HepG2 (cell line): ENCODE measurements at regions of chr13 and their contacts with region 1.

Region 1: GRCh38 chr13:70960841-70961443 is 852.7 kb upstream of the KLHL1 start:
- DNase-seq: peak; percentile 18
- ATAC-seq: no peak
- H3K4me3 ChIP-seq: no peak overlapping the region
- H3K27ac ChIP-seq: no peak overlapping the region
- H3K4me1 ChIP-seq: no peaks in the 10 kb centered on the region
- H3K27me3 ChIP-seq: no peaks in the 10 kb centered on the region
- CTCF ChIP-seq: peak; percentile 58
- EP300 ChIP-seq: no peak
- POLR2A ChIP-seq: no peak
- RAD21 ChIP-seq: no peak

Region 2: DNA sequence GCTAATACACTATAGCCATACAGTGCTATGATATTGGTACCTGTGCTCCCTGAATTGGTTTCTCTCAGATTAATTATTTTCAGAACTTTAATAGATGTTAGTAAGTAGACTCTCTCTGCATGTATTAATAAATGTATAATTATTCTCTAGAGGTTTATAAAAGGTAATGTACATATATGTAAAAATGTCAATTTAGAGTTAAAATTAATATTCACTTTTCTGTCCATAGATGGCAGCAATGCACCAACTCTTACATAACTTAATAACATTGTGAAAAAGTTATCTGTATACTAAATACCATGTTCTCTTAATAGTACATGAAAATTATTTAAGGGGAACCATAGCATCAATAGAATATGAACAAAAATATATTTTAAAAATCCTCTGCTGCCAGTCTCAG is 337.7 kb before region 1 on chr13:
- CTCF ChIA-PET with region 1: interaction called, 13 read pairs
- POLR2A ChIA-PET with region 1: no interaction called
- in situ Hi-C with region 1: loop called (anchors 25 kb)
- intact Hi-C with region 1: loop called (anchors 1 kb)
- DNase-seq: no peak
- ATAC-seq: no peak
- H3K4me3 ChIP-seq: no peak overlapping the region
- H3K27ac ChIP-seq: no peak overlapping the region
- H3K4me1 ChIP-seq: no peaks in the 10 kb centered on the region
- H3K27me3 ChIP-seq: no peaks in the 10 kb centered on the region
- CTCF ChIP-seq: peak; percentile 17
- EP300 ChIP-seq: no peak
- POLR2A ChIP-seq: no peak
- RAD21 ChIP-seq: no peak

Region 3: GRCh38 chr13:70630247-70630646 is 330.7 kb before region 1 on chr13:
- CTCF ChIA-PET with region 1: no interaction called
- POLR2A ChIA-PET with region 1: no interaction called
- in situ Hi-C with region 1: loop called (anchors 25 kb)
- intact Hi-C with region 1: no loop called
- DNase-seq: no peak
- ATAC-seq: no peak
- H3K4me3 ChIP-seq: no peak overlapping the region
- H3K27ac ChIP-seq: no peak overlapping the region
- H3K4me1 ChIP-seq: no peaks in the 10 kb centered on the region
- H3K27me3 ChIP-seq: no peaks in the 10 kb centered on the region
- CTCF ChIP-seq: no peak
- EP300 ChIP-seq: no peak
- POLR2A ChIP-seq: no peak
- RAD21 ChIP-seq: no peak

Region 4: DNA sequence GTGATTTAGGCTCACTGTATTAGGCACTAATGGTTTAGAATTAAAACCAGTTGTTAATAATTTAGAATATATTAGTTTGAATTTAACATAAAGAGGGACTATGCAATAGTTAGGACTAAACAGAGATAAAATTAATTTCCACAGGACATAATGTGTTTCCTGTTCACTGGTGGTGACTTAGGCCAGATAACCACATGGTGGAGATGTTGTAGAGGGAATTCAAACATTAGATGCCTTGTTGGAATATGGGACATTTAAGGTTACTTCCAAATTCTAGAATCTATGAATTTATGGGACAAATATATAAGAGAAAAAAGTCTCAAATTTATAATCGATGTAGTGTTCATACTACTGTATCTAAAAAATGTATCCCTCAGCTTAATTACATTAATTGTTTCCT is 237.2 kb before region 1 on chr13:
- CTCF ChIA-PET with region 1: no interaction called
- POLR2A ChIA-PET with region 1: no interaction called
- in situ Hi-C with region 1: no loop called
- intact Hi-C with region 1: loop called (anchors 1 kb)
- DNase-seq: peak; percentile 5
- ATAC-seq: peak; percentile 50; the same call in 2 of the 3 replicates
- H3K4me3 ChIP-seq: no peak overlapping the region
- H3K27ac ChIP-seq: no peak overlapping the region
- H3K4me1 ChIP-seq: no peaks in the 10 kb centered on the region
- H3K27me3 ChIP-seq: no peaks in the 10 kb centered on the region
- CTCF ChIP-seq: peak; percentile 49
- EP300 ChIP-seq: no peak
- POLR2A ChIP-seq: no peak
- RAD21 ChIP-seq: no peak

Region 5: GRCh38 chr13:70795484-70795883 is 165.5 kb before region 1 on chr13:
- CTCF ChIA-PET with region 1: interaction called, 3 read pairs
- POLR2A ChIA-PET with region 1: no interaction called
- in situ Hi-C with region 1: loop called (anchors 10 kb)
- intact Hi-C with region 1: loop called (anchors 1 kb)
- DNase-seq: peak; percentile 2
- ATAC-seq: peak; percentile 71
- H3K4me3 ChIP-seq: no peak overlapping the region
- H3K27ac ChIP-seq: no peak overlapping the region
- H3K4me1 ChIP-seq: no peaks in the 10 kb centered on the region
- H3K27me3 ChIP-seq: no peaks in the 10 kb centered on the region
- CTCF ChIP-seq: no peak
- EP300 ChIP-seq: no peak
- POLR2A ChIP-seq: no peak
- RAD21 ChIP-seq: no peak

Region 6: GRCh38 chr13:70841240-70842061 is 119.5 kb before region 1 on chr13:
- CTCF ChIA-PET with region 1: no interaction called
- POLR2A ChIA-PET with region 1: no interaction called
- in situ Hi-C with region 1: no loop called
- intact Hi-C with region 1: loop called (anchors 1 kb)
- DNase-seq: no peak
- ATAC-seq: peak; percentile 53
- H3K4me3 ChIP-seq: no peak overlapping the region
- H3K27ac ChIP-seq: no peak overlapping the region
- H3K4me1 ChIP-seq: no peaks in the 10 kb centered on the region
- H3K27me3 ChIP-seq: no peaks in the 10 kb centered on the region
- CTCF ChIP-seq: no peak
- EP300 ChIP-seq: no peak
- POLR2A ChIP-seq: no peak
- RAD21 ChIP-seq: no peak

Region 7: GRCh38 chr13:70941454-70941853 is 19.5 kb before region 1 on chr13:
- CTCF ChIA-PET with region 1: no interaction called
- POLR2A ChIA-PET with region 1: no interaction called
- in situ Hi-C with region 1: no loop called
- intact Hi-C with region 1: no loop called
- DNase-seq: peak; percentile 2
- ATAC-seq: no peak
- H3K4me3 ChIP-seq: no peak overlapping the region
- H3K27ac ChIP-seq: no peak overlapping the region
- H3K4me1 ChIP-seq: no peaks in the 10 kb centered on the region
- H3K27me3 ChIP-seq: no peaks in the 10 kb centered on the region
- CTCF ChIP-seq: no peak
- EP300 ChIP-seq: no peak
- POLR2A ChIP-seq: no peak
- RAD21 ChIP-seq: no peak

Region 8: GRCh38 chr13:71218960-71219359 is 258.0 kb after region 1 on chr13:
- CTCF ChIA-PET with region 1: interaction called, 4 read pairs
- POLR2A ChIA-PET with region 1: no interaction called
- in situ Hi-C with region 1: no loop called
- intact Hi-C with region 1: loop called (anchors 2 kb)
- DNase-seq: peak; percentile 7
- ATAC-seq: peak; percentile 55; the same call in 1 of the 3 replicates
- H3K4me3 ChIP-seq: no peak overlapping the region
- H3K27ac ChIP-seq: no peak overlapping the region
- H3K4me1 ChIP-seq: no peaks in the 10 kb centered on the region
- H3K27me3 ChIP-seq: peaks cover 0 to 2% of the 10 kb centered on the region in 2 experiments; a peak in 1 of 5 replicates
- CTCF ChIP-seq: peak; percentile 44
- EP300 ChIP-seq: no peak
- POLR2A ChIP-seq: no peak
- RAD21 ChIP-seq: no peak